Caco-2 (cell line): ENCODE measurements at regions of chr1 and their contacts with region 1.

Region 1: GRCh38 chr1:8858888-8859706 is 19.4 kb downstream of the ENO1 start:
- DNase-seq: peak; percentile 53 to 68
- H3K4me3 ChIP-seq: no peak overlapping the region
- H3K4me3 Mint-ChIP-seq: no peak overlapping the region
- H3K27ac Mint-ChIP-seq: peak overlapping the region; percentile 45
- H3K4me1 ChIP-seq: peaks cover 21% of the 10 kb centered on the region
- H3K4me1 Mint-ChIP-seq: peaks cover 6% of the 10 kb centered on the region
- H3K27me3 ChIP-seq: no peaks in the 10 kb centered on the region
- H3K27me3 Mint-ChIP-seq: no peaks in the 10 kb centered on the region
- CTCF ChIP-seq: peak; percentile 36 to 63

Region 2: DNA sequence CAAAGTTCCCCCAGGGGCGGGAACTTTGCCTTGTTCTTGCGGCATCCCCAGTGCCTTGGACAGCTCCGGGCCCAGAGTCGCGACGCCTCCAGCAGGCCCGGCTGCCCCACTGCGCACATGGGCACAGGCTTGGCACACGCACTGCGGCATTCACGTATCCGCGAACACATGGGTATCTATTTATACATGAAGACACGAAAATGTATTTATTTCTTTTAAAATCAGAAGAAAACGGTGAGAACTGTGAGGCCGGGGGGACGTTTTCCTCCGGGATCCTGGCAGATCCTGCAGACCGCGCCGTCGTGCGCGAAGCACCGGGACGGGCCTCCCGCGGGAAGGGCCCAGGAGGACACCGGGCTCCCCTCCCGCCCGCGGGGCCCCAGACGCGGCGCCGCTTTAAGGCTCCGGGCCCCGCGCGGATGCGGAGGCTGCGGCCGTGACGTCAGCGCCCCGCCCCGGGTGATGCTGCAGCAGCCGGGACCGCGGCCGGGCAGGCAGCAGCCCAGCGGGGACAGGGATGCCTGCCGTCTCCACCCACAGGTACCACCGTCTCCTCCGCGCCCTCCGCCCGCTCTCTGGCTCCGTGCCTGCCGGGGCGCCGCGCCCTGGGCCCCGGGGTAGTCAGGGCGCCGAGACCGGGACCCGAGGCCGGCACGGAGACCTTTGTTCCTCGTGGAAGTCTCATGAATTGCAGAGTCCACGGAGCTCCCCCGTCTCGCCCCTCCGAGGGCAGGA is 541.3 kb before region 1 on chr1 and contains the start of gene SLC45A1:
- CTCF ChIA-PET with region 1: no interaction called
- POLR2A ChIA-PET with region 1: no interaction called
- intact Hi-C with region 1: no loop called
- DNase-seq: peak; percentile 52 to 71
- H3K4me3 ChIP-seq: peak within 1 kb of the TSS; percentile 37
- H3K4me3 Mint-ChIP-seq: peak within 1 kb of the TSS; percentile 71
- H3K27ac Mint-ChIP-seq: no peak within 1 kb of the TSS
- H3K4me1 ChIP-seq: peaks cover 13% of the 10 kb centered on the region; the same call in 1 of the 2 replicates
- H3K4me1 Mint-ChIP-seq: peaks cover 20% of the 10 kb centered on the region
- H3K27me3 ChIP-seq: no peaks in the 10 kb centered on the region
- H3K27me3 Mint-ChIP-seq: no peaks in the 10 kb centered on the region
- CTCF ChIP-seq: no peak
- total RNA-seq, gene SLC45A1: 0.41 and 0.44 TPM in 2 replicates

Region 3: DNA sequence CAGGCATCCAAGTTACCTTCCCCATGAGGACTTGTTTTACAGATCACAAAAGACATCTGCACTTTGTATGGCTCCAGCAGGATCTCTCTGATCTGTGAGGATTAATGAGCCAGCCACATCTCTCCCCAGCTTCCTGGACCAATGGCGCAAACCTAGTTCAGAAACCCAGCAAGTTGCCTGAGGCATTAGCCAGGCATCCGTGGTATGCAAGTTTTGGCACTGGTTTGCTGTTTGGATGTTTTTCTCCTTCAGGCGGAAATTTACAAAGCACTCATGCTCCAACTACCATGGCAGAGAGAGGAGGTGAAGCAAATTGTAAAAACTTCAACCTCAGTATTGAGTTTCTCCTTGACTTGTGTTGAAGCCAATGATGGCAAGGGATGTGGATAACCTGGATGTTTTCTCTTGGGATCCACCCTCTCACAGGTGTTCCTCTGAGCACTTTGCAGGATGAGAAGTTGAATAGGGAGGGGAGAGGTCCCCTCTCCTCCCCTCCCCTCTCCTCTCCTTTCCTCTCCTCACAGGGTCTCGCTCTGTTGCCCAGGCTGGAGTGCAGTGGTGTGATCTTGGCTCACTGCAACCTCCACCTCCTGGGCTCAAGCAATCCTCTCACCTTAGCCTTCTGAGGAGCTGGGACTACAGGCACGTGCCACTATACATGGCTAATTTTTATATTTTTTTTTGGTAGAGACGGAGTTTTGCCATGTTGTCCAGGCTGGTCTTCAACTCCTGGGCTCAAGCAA is 45.0 kb after region 1 on chr1:
- CTCF ChIA-PET with region 1: no interaction called
- POLR2A ChIA-PET with region 1: no interaction called
- intact Hi-C with region 1: loop called (anchors 2 kb)
- DNase-seq: peak; percentile 67 to 74
- H3K4me3 ChIP-seq: no peak overlapping the region
- H3K4me3 Mint-ChIP-seq: no peak overlapping the region
- H3K27ac Mint-ChIP-seq: no peak overlapping the region
- H3K4me1 ChIP-seq: peaks cover 18% of the 10 kb centered on the region; the same call in 1 of the 2 replicates
- H3K4me1 Mint-ChIP-seq: peaks cover 15% of the 10 kb centered on the region
- H3K27me3 ChIP-seq: no peaks in the 10 kb centered on the region
- H3K27me3 Mint-ChIP-seq: no peaks in the 10 kb centered on the region
- CTCF ChIP-seq: no peak